ENCODE measurements at regions of chr1 and their contacts with region 1.

Region 1: GRCh38 chr1:42958488-42959319 is at the start of gene SLC2A1:
- DNase-seq: peak; percentile 92 to 98 (median 96)
- ATAC-seq: peak; percentile 90
- H3K4me3 ChIP-seq: peak within 1 kb of the TSS; percentile 79 to 96
- H3K4me3 Mint-ChIP-seq: peak within 1 kb of the TSS; percentile 98
- H3K27ac ChIP-seq: peak within 1 kb of the TSS; percentile 76 to 86
- H3K27ac Mint-ChIP-seq: peak within 1 kb of the TSS; percentile 99
- H3K4me1 ChIP-seq: peaks cover 42% of the 10 kb centered on the region
- H3K4me1 Mint-ChIP-seq: peaks cover 51% of the 10 kb centered on the region
- H3K27me3 ChIP-seq: no peaks in the 10 kb centered on the region
- H3K27me3 Mint-ChIP-seq: no peaks in the 10 kb centered on the region
- CTCF ChIP-seq: no peak
- total RNA-seq, gene SLC2A1: 85.0 to 97.2 TPM

Region 2: GRCh38 chr1:42456010-42456758 is 502.5 kb before region 1 on chr1 and contains the starts of genes PPCS and ZMYND12:
- CTCF ChIA-PET with region 1: no interaction called
- POLR2A ChIA-PET with region 1: no interaction called
- intact Hi-C with region 1: loop called (anchors 2 to 10 kb)
- DNase-seq: peak; percentile 82 to 98 (median 91)
- ATAC-seq: peak; percentile 92
- H3K4me3 ChIP-seq: peak within 1 kb of the TSS; percentile 99
- H3K4me3 Mint-ChIP-seq: peak within 1 kb of the TSS; percentile 98
- H3K27ac ChIP-seq: peak within 1 kb of the TSS; percentile 99 to 100
- H3K27ac Mint-ChIP-seq: peak within 1 kb of the TSS; percentile 100
- H3K4me1 ChIP-seq: peaks cover 25% of the 10 kb centered on the region
- H3K4me1 Mint-ChIP-seq: peaks cover 37% of the 10 kb centered on the region
- H3K27me3 ChIP-seq: no peaks in the 10 kb centered on the region
- H3K27me3 Mint-ChIP-seq: no peaks in the 10 kb centered on the region
- CTCF ChIP-seq: peak; percentile 34
- total RNA-seq, gene PPCS: 38.0 to 38.1 TPM
- total RNA-seq, gene ZMYND12: 0.56 to 0.76 TPM

Region 3: GRCh38 chr1:42681741-42682483 is 276.8 kb before region 1 on chr1 and contains the start of gene YBX1:
- CTCF ChIA-PET with region 1: no interaction called
- POLR2A ChIA-PET with region 1: no interaction called
- intact Hi-C with region 1: loop called (anchors 2 to 10 kb)
- DNase-seq: peak; percentile 88 to 98 (median 95)
- ATAC-seq: peak; percentile 89
- H3K4me3 ChIP-seq: peak within 1 kb of the TSS; percentile 81 to 84
- H3K4me3 Mint-ChIP-seq: peak within 1 kb of the TSS; percentile 99
- H3K27ac ChIP-seq: peak within 1 kb of the TSS; percentile 82 to 88
- H3K27ac Mint-ChIP-seq: peak within 1 kb of the TSS; percentile 97
- H3K4me1 ChIP-seq: peaks cover 43% of the 10 kb centered on the region
- H3K4me1 Mint-ChIP-seq: peaks cover 58% of the 10 kb centered on the region
- H3K27me3 ChIP-seq: no peaks in the 10 kb centered on the region
- H3K27me3 Mint-ChIP-seq: no peaks in the 10 kb centered on the region
- CTCF ChIP-seq: no peak
- total RNA-seq, gene YBX1: 440 to 450 TPM

Region 4: DNA sequence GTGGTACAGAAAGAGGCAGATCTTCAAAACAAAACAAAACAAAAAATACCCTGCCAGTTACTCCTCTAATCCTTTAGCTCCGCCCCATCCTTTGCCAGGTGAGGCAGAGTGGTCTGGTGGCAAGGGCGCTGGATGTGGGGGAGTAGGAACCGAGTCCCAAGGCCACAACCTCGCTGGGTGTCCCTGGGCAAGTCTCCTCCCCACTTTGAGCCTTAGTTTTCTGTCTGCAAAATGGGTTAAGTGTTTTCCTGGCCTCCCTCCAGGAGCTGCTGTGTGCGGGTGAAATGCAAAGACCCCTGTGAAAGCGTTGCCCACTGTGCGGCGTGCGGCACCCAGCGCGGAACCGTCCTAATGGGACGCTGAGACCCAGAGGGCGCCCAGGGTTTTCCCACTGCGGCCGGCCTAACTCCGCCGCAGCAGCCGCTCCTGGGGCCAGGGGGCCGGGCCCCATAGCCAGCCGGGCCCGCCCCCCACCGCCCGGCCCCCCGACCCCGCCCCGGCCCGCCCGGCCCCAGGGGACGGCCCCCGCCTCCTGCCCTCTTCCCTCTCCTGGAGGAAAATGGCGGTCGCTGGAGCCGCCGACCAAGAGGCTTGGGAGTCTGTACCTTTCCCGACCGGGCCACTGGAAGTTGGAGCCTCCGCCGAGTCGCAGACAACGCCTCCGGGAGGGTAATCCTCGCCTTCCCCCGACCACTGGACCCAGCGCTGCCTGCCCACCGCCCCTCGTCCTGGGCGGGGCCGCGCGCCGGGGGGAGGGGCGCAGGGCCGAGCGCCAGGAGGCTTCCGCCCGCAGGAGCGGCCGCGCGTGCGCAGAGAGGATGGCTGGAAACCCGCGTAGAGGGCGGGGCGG is 141.9 kb before region 1 on chr1 and contains the starts of genes ERMAP and SVBP:
- CTCF ChIA-PET with region 1: no interaction called
- POLR2A ChIA-PET with region 1: no interaction called
- intact Hi-C with region 1: loop called (anchors 1 to 2 kb)
- DNase-seq: peak; percentile 85 to 98 (median 95)
- ATAC-seq: peak; percentile 91
- H3K4me3 ChIP-seq: peak within 1 kb of the TSS; percentile 63 to 88
- H3K4me3 Mint-ChIP-seq: peak within 1 kb of the TSS; percentile 80
- H3K27ac ChIP-seq: peak within 1 kb of the TSS; percentile 69 to 89
- H3K27ac Mint-ChIP-seq: peak within 1 kb of the TSS; percentile 85
- H3K4me1 ChIP-seq: peaks cover 16% of the 10 kb centered on the region
- H3K4me1 Mint-ChIP-seq: peaks cover 27% of the 10 kb centered on the region
- H3K27me3 ChIP-seq: no peaks in the 10 kb centered on the region
- H3K27me3 Mint-ChIP-seq: no peaks in the 10 kb centered on the region
- CTCF ChIP-seq: no peak
- total RNA-seq, gene ERMAP: 3.0 to 3.3 TPM
- total RNA-seq, gene SVBP: 17.6 to 18.3 TPM

Region 5: DNA sequence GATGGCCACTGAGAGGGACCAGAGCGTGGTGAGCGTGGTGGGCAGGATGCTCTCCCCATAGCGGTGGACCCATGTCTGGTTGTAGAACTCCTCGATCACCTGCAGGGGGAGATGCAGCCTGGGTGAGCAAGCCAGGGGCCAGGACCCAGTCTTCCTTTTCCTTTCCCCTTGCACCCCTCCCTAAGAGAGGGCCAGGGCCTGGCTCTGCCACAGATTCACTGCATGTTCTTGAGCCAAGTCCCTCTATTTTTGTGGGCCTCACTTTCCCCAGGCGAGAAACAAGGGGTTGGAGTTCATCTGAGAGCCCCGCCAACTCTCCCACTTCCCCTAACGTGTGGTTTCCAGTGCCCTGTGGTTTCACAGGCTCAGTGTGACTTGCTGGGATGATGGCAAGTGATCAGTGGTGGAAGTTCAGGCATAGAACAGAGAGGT is 27.6 kb before region 1 on chr1:
- CTCF ChIA-PET with region 1: interaction called, 10 read pairs
- POLR2A ChIA-PET with region 1: interaction called, 16 read pairs
- intact Hi-C with region 1: loop called (anchors 1 kb)
- DNase-seq: peak in 7 of 9 experiments; percentile 46 to 89 (median 67)
- ATAC-seq: peak; percentile 49
- H3K4me3 ChIP-seq: peak overlapping the region; percentile 22 to 43
- H3K4me3 Mint-ChIP-seq: peak overlapping the region; percentile 70
- H3K27ac ChIP-seq: peak overlapping the region; percentile 63 to 90
- H3K27ac Mint-ChIP-seq: peak overlapping the region; percentile 95
- H3K4me1 ChIP-seq: peaks cover 67% of the 10 kb centered on the region
- H3K4me1 Mint-ChIP-seq: peaks cover 67% of the 10 kb centered on the region
- H3K27me3 ChIP-seq: no peaks in the 10 kb centered on the region
- H3K27me3 Mint-ChIP-seq: no peaks in the 10 kb centered on the region
- CTCF ChIP-seq: peak; percentile 57

Region 6: DNA sequence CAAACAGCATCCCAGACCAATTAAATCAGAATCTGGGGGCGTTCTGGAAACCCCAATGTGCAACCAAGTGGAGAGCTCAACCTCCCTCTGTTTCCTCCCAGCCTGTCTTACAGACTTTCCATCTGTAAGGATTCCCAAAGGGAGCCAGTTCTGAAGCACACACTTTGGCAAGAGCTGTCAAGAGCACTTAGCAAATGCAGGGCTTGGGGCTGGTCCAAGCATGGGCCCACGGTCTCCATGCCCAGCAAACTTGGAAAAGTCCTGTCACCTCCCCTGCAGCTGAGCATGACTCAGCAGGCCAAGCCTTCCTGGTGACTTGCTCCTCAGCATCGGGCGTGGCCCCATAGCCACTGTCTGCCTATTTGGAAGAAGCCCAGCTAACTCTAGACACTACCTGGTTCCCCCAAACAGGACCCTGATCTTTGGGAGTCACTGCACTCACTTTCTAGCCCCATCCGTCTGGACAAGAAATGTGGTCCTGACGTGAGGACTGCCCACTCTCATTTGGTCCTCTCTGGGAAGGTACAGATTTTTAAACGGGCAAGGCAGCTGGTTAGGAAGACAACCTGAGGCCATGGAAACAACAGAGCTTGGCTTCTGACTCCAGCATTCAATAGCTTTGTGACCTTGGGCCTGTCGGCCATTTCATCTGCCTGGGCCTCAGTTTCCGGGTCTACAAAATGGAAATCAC is 16.9 kb before region 1 on chr1:
- CTCF ChIA-PET with region 1: interaction called, 5 read pairs
- POLR2A ChIA-PET with region 1: interaction called, 9 read pairs
- intact Hi-C with region 1: loop called in 1 of 2 experiments (anchors 1 kb)
- DNase-seq: no peak
- ATAC-seq: no peak
- H3K4me3 ChIP-seq: no peak overlapping the region
- H3K4me3 Mint-ChIP-seq: no peak overlapping the region
- H3K27ac ChIP-seq: peak overlapping the region in 1 of 2 experiments; percentile 69
- H3K27ac Mint-ChIP-seq: peak overlapping the region; percentile 86
- H3K4me1 ChIP-seq: peaks cover 78% of the 10 kb centered on the region
- H3K4me1 Mint-ChIP-seq: peaks cover 95% of the 10 kb centered on the region
- H3K27me3 ChIP-seq: no peaks in the 10 kb centered on the region
- H3K27me3 Mint-ChIP-seq: no peaks in the 10 kb centered on the region
- CTCF ChIP-seq: no peak

Region 7: DNA sequence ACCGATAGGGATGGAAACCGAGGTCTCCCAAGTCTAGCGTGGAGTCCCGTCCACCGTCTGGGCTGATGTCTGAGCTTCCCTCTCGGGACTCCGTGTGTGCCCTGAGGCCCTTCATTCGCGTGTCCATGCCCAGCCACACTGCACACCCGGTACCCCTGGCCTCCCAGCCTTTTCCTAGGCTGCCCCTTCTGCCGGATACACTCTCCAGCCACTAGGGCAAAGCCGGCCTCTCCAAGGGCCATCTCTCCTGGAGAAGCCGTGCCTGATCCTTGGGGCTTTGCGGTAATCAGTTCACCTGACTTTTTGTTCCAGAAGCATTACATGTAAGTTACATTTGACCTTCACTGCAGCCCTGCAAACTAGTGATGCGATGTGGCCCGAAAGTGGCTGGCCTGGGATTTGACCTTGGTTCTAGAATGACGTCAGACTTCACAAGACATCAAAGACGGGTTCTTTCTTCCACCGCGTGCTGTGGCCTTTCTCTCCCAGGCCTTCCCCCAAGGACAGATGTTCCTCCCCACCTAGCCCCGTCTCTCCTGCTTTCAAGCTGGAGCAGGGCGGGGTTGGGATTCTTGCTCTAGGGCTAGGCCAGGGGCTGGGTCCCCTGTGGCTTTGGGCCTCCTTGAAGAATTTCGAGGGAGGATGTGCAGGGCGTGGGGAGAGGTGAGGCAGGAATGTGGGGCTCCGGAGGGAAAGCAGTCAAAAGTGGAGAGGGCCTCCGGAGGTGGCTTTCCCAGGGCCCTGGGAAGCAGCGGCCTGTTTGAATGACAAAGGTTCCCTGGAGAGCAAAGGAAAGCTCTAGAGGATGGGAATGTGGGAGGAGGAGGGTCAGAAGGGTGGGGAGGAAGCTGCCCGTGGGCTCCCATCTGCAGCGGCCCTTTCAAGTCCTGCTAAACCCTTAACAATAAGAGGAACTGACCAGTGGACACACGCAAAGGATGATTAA is 49.7 kb after region 1 on chr1:
- CTCF ChIA-PET with region 1: no interaction called
- POLR2A ChIA-PET with region 1: no interaction called
- intact Hi-C with region 1: no loop called
- DNase-seq: no peak
- ATAC-seq: no peak
- H3K4me3 ChIP-seq: no peak overlapping the region
- H3K4me3 Mint-ChIP-seq: no peak overlapping the region
- H3K27ac ChIP-seq: no peak overlapping the region
- H3K27ac Mint-ChIP-seq: no peak overlapping the region
- H3K4me1 ChIP-seq: no peaks in the 10 kb centered on the region
- H3K4me1 Mint-ChIP-seq: no peaks in the 10 kb centered on the region
- H3K27me3 ChIP-seq: no peaks in the 10 kb centered on the region
- H3K27me3 Mint-ChIP-seq: no peaks in the 10 kb centered on the region
- CTCF ChIP-seq: no peak